ENCODE measurements at regions of chr5 and their contacts with region 1.

Region 1: GRCh38 chr5:149960272-149961185 is at the start of gene SLC26A2:
- DNase-seq: peak; percentile 97
- ATAC-seq: peak; percentile 97
- H3K4me3 Mint-ChIP-seq: peak within 1 kb of the TSS; percentile 92
- H3K27ac Mint-ChIP-seq: peak within 1 kb of the TSS; percentile 100
- H3K4me1 Mint-ChIP-seq: peaks cover 32% of the 10 kb centered on the region
- H3K27me3 Mint-ChIP-seq: no peaks in the 10 kb centered on the region
- total RNA-seq, gene SLC26A2: 3.9 to 5.3 TPM

Region 2: DNA sequence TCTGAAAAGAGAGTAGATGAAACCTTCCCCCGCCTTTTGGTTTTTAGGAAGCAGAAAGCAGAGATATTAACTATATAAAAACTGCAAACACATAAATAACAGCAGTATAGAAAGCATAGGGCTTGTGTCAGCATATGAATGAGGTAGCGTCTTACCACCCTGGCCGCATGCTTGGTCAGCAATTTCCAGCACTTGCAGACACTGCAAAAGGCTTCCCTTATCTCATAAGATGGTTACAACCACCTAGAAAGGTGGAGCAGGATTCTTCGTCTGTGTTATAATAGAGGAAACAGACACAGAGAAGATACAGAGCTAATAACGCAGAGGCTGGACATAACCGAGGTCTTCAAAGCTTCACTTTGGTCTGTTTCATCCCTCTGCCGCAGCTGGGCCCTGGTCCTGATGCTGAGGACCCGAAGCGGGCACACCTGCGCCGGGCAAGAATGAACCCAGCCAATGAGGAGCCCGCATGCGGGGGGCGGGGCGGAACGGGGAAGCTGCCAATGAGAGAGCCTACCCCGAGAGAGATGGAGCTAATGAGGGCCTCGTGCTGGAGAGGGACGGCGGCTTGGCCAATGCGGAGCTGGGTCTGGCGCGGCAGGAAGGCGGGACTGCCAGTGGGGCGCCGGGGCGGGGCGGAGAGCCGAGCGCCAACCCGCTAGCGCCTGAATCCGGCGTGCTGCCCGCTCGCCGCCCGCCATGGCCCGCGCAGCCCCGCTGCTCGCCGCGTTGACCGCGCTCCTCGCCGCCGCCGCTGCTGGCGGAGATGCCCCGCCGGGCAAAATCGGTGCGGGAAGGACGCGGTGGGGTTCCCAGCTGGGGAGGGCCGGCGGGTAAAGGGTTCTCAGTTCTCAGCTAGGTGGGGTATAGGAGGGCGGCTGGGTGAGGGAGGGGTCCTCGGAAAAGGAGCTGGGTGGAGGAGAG is 602.9 kb before region 1 on chr5 and contains the start of gene PCYOX1L:
- CTCF ChIA-PET with region 1: no interaction called
- POLR2A ChIA-PET with region 1: no interaction called
- intact Hi-C with region 1: loop called in 1 of 2 experiments (anchors 5 kb)
- DNase-seq: peak; percentile 96
- ATAC-seq: peak; percentile 98
- H3K4me3 Mint-ChIP-seq: peak within 1 kb of the TSS; percentile 94
- H3K27ac Mint-ChIP-seq: peak within 1 kb of the TSS; percentile 89
- H3K4me1 Mint-ChIP-seq: peaks cover 66% of the 10 kb centered on the region
- H3K27me3 Mint-ChIP-seq: no peaks in the 10 kb centered on the region
- total RNA-seq, gene PCYOX1L: 17.5 to 18.8 TPM

Region 3: GRCh38 chr5:149731639-149732323 is 228.7 kb before region 1 on chr5:
- CTCF ChIA-PET with region 1: interaction called, 4 read pairs
- POLR2A ChIA-PET with region 1: interaction called, 3 read pairs
- intact Hi-C with region 1: loop called in 1 of 2 experiments (anchors 1 kb)
- DNase-seq: peak; percentile 90
- ATAC-seq: peak; percentile 48
- H3K4me3 Mint-ChIP-seq: peak overlapping the region; percentile 79
- H3K27ac Mint-ChIP-seq: no peak overlapping the region
- H3K4me1 Mint-ChIP-seq: peaks cover 2% of the 10 kb centered on the region
- H3K27me3 Mint-ChIP-seq: no peaks in the 10 kb centered on the region

Region 4: DNA sequence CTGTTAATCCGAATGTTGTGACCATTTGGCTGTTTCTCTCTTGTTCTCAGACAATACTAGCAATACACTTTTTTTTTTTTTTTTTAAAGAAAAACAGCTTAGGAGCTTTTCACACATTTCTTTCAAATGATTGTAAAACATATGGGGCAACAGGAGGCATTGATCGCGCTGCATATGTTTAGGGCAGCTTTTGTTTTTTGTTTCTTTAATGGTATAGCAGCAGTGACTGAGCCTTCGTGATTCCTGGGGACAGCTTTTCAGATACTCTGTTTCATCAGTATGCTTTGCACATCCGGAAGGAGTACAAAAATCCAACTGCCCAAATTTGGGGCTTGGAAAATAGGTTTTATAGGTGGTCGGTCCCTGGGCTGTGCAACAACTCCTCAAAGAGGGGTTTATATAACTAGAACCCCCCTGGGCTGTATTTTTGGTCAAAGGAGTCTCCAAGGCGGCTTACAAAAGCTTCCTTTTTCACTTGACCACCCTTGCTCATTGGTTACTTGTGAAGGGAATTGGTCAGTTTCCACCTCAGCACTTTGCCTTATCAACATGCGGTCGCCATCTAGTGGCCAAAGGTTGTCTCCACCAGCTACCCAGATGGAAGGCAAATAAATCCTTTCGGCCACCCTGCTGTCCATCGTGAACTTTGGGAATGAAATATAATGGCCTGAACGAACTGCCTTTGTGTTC is 107.7 kb before region 1 on chr5:
- CTCF ChIA-PET with region 1: interaction called, 12 read pairs
- POLR2A ChIA-PET with region 1: interaction called, 4 read pairs
- intact Hi-C with region 1: no loop called
- DNase-seq: peak; percentile 67
- ATAC-seq: no peak
- H3K4me3 Mint-ChIP-seq: no peak overlapping the region
- H3K27ac Mint-ChIP-seq: no peak overlapping the region
- H3K4me1 Mint-ChIP-seq: no peaks in the 10 kb centered on the region
- H3K27me3 Mint-ChIP-seq: no peaks in the 10 kb centered on the region

Region 5: GRCh38 chr5:149990518-149991376 is 30.2 kb after region 1 on chr5:
- CTCF ChIA-PET with region 1: interaction called, 54 read pairs
- POLR2A ChIA-PET with region 1: no interaction called
- intact Hi-C with region 1: loop called in 1 of 2 experiments (anchors 2 kb)
- DNase-seq: peak; percentile 81
- ATAC-seq: peak; percentile 94
- H3K4me3 Mint-ChIP-seq: no peak overlapping the region
- H3K27ac Mint-ChIP-seq: no peak overlapping the region
- H3K4me1 Mint-ChIP-seq: no peaks in the 10 kb centered on the region
- H3K27me3 Mint-ChIP-seq: no peaks in the 10 kb centered on the region

Region 6: DNA sequence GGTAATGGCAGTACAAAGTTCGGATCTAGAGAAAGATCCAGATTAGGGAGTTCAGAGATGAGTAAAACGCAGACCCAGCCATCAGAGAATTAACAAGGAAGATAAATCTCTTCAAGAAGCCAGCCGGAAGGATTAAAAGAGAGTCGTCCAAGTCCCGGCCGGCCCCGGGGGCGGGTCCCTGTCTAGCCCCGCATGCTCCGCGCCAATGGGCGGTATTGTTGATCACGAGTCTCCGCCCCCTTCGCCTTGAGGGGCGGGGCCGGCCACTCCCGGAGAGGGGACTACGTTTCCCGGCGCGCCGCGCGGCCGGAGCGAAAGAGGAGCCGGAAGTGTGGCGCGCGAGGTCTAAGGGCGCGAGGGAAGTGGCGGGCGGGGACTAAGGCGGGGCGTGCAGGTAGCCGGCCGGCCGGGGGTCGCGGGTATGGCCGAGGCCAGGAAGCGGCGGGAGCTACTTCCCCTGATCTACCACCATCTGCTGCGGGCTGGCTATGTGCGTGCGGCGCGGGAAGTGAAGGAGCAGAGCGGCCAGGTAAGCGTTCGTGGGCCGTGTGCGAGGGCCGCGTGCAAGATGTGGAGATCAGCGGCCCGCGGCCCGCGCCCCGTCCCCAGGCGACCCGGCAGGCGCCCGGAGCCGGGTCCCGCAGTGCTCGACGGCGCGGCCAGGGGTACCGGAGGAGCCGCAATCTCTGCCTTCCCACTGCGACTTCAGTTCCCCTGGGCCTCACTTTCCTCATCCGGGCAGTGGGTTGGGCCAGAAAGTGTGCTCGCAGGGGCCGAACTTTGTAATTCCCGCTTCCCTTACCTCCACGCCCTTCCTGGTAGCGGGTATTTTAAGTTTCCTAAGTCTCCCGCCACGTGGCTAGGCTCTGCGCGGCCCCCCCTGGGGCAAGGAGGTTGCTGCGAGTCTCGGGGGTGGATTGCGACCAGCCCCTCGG is 397.1 kb after region 1 on chr5 and contains the start of gene TCOF1:
- CTCF ChIA-PET with region 1: no interaction called
- POLR2A ChIA-PET with region 1: no interaction called
- intact Hi-C with region 1: loop called in 1 of 2 experiments (anchors 1 kb)
- DNase-seq: peak; percentile 99
- ATAC-seq: peak; percentile 99
- H3K4me3 Mint-ChIP-seq: peak within 1 kb of the TSS; percentile 87
- H3K27ac Mint-ChIP-seq: peak within 1 kb of the TSS; percentile 90
- H3K4me1 Mint-ChIP-seq: peaks cover 43% of the 10 kb centered on the region
- H3K27me3 Mint-ChIP-seq: no peaks in the 10 kb centered on the region
- total RNA-seq, gene TCOF1: 113 to 145 TPM

Region 7: DNA sequence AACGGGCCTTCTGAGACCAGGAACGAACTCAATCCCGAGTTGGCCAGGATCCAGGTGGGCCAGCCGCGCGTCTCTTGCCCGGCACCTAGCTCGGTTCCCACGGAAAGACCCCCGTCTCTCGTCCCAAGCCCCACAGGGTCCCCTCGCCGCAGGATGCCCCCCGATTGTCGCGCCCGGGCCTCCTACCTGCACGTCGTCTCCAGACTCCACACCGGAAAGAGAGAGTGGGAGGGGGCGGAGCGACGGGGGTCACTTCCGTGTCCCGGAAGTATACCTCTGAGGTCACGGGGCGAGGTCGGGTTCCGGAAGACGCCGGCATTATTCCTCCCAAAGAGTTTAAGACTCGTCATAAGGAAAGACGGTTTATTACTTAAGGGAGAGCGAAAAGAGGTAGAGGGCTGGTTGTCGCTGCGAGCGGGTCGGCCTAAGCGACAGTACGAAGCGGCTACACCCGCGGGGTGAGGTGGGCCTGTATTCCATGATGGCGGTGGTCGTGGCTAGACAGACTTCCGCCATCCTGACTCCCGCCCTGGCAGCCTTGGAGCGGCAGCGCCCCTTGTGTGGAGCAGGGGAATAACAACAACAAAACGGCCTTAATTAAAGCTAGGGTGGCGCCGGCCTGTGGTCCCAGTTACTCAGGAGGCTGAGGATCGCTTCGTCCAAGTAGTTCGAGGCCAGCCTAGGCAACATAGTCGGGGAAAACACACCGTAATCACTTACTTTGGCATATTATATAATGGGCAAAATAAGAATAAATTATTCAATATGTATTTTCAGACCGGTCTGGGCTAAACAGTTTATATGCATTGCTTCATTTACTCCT is 489.2 kb after region 1 on chr5 and contains the start of gene RPS14:
- CTCF ChIA-PET with region 1: no interaction called
- POLR2A ChIA-PET with region 1: no interaction called
- intact Hi-C with region 1: loop called in 1 of 2 experiments (anchors 1 kb)
- DNase-seq: peak; percentile 96
- ATAC-seq: peak; percentile 93
- H3K4me3 Mint-ChIP-seq: peak within 1 kb of the TSS; percentile 95
- H3K27ac Mint-ChIP-seq: peak within 1 kb of the TSS; percentile 99
- H3K4me1 Mint-ChIP-seq: peaks cover 31% of the 10 kb centered on the region
- H3K27me3 Mint-ChIP-seq: no peaks in the 10 kb centered on the region
- total RNA-seq, gene RPS14: 2,270 to 3,312 TPM